ENCODE measurements at regions of chr9 and their contacts with region 1.

Region 1: DNA sequence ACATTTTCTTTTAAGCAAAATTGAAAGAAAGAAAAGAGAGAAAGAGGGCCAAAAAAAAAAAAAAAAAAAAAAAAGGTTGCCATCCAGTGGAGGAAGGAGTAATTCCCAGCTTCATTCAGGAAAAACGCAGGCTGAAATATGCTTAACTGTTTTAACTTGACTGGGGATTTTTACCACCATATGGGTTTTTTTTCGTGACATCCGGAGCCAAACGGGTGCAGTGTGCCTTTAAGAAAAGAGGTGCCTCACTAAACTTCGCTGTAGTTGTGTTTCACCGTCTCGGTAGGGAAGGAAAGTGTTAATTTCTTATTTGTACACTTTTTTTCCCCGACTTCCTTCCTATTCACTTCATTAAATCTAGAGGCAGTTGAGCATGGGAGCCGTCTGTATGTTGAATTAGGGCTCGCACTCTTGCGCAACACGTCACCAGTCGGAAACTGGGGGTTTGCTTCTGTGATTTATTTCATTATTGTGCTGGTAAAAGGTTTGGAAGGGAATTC is 143.0 kb downstream of the SMARCA2 start:
- DNase-seq: peak; percentile 80
- H3K4me3 Mint-ChIP-seq: peak overlapping the region; percentile 87
- H3K27ac Mint-ChIP-seq: peak overlapping the region; percentile 95
- H3K4me1 Mint-ChIP-seq: peaks cover 32% of the 10 kb centered on the region
- H3K27me3 Mint-ChIP-seq: no peaks in the 10 kb centered on the region

Region 2: DNA sequence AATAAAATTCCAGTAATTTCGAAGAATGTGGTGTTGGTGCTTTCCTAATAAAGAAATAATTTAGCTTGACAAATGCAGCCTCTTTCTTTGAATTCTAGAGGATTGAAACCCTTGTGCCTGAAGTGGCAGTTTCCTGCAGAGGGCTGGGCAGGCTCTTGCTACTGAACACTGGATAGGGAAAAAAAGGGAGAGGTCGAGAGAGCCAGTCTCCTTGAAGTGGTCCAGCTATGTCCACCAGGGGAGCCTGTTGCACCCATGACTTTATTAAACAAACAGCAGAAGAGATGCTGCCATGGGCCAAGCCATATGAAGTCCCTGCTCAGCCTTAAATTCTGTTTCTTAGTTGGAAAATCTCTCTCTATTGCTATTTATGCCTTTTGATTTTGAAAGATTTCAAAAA is 35.4 kb after region 1 on chr9:
- intact Hi-C with region 1: loop called (anchors 2 kb)
- DNase-seq: no peak
- H3K4me3 Mint-ChIP-seq: no peak overlapping the region
- H3K27ac Mint-ChIP-seq: no peak overlapping the region
- H3K4me1 Mint-ChIP-seq: peaks cover 8% of the 10 kb centered on the region
- H3K27me3 Mint-ChIP-seq: no peaks in the 10 kb centered on the region

Region 3: GRCh38 chr9:2241836-2242741 is 83.9 kb after region 1 on chr9:
- intact Hi-C with region 1: loop called (anchors 2 kb)
- DNase-seq: peak; percentile 91
- H3K4me3 Mint-ChIP-seq: peak overlapping the region; percentile 83
- H3K27ac Mint-ChIP-seq: peak overlapping the region; percentile 80
- H3K4me1 Mint-ChIP-seq: peaks cover 12% of the 10 kb centered on the region
- H3K27me3 Mint-ChIP-seq: peaks cover 29% of the 10 kb centered on the region

Region 4: GRCh38 chr9:2655411-2655901 is 497.3 kb after region 1 on chr9:
- intact Hi-C with region 1: loop called (anchors 10 kb)
- DNase-seq: peak; percentile 83
- H3K4me3 Mint-ChIP-seq: peak overlapping the region; percentile 53
- H3K27ac Mint-ChIP-seq: peak overlapping the region; percentile 94
- H3K4me1 Mint-ChIP-seq: peaks cover 20% of the 10 kb centered on the region
- H3K27me3 Mint-ChIP-seq: no peaks in the 10 kb centered on the region

Measured in activated CD4-positive, alpha-beta T cell treated with anti-CD3 and anti-CD28 coated beads, Interleukin-2, amount 10 ng/mL, durations not matched to agents 24 days and 14 days (primary cell).